ENCODE measurements at regions of chr1 and their contacts with region 1.

Region 1: GRCh38 chr1:206556750-206557635 is 49.7 kb downstream of the RASSF5 start:
- DNase-seq: peak; percentile 62 to 71
- ATAC-seq: peak; percentile 14 to 32
- H3K4me3 ChIP-seq: peak overlapping the region; percentile 56 to 91 (median 68)
- H3K27ac ChIP-seq: peak overlapping the region; percentile 35 to 81 (median 61)
- H3K4me1 ChIP-seq: peaks cover 31 to 55% of the 10 kb centered on the region in 2 donors
- H3K27me3 ChIP-seq: no peaks in the 10 kb centered on the region
- CTCF ChIP-seq: peak in 1 of 5 experiments; percentile 14
- POLR2A ChIP-seq: peak; percentile 16 to 30

Region 2: DNA sequence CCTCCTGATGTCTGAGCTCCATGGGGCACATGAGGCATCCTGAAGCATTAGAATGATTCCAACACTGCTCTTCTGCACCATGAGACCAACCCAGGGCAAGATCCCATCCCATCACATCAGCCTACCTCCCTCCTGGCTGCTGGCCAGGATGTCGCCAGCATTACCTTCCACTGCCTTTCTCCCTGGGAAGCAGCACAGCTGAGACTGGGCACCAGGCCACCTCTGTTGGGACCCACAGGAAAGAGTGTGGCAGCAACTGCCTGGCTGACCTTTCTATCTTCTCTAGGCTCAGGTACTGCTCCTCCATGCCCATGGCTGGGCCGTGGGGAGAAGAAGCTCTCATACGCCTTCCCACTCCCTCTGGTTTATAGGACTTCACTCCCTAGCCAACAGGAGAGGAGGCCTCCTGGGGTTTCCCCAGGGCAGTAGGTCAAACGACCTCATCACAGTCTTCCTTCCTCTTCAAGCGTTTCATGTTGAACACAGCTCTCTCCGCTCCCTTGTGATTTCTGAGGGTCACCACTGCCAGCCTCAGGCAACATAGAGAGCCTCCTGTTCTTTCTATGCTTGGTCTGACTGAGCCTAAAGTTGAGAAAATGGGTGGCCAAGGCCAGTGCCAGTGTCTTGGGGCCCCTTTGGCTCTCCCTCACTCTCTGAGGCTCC is 60.7 kb before region 1 on chr1:
- in situ Hi-C with region 1: no loop called
- intact Hi-C with region 1: no loop called
- DNase-seq: no peak
- ATAC-seq: no peak
- H3K4me3 ChIP-seq: no peak overlapping the region
- H3K27ac ChIP-seq: no peak overlapping the region
- H3K4me1 ChIP-seq: peaks cover 3 to 7% of the 10 kb centered on the region in 2 donors
- H3K27me3 ChIP-seq: no peaks in the 10 kb centered on the region
- CTCF ChIP-seq: no peak
- POLR2A ChIP-seq: no peak

Region 3: DNA sequence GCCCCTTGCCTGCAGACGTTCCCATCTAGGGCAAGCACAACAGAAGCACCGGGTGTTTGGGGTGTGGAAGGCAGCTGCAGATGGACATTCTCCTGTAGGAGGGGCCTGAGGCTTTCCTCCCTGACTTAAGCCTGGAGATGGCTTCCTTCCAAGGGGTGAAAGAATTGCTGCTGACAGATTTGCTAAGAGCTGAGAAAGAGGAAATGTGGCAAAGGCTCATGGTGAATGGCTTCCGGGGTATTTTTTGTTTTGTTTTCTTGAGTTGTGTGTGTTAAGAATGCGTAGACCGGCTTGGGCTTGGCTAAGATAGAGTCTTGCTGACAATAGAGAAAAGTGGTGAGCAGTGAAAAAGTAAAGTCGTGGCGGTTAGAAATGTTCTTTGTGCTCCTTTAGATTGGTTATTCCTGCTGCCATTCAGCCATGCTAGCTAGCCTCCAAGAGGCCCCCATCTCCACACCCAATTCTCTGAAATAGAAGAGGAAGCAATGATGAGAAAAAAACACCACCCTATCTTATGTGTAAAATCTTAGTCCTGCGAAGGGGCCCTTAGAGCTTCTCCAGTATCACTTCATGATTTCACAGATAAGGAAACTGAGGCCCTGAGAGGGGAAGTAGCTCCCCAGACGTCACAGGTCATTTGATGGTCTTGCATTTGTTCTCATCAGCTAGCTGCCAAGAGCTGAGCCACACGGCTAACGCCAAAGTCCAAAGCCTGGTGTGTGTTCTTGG is 18.3 kb after region 1 on chr1:
- in situ Hi-C with region 1: no loop called
- intact Hi-C with region 1: loop called (anchors 1 kb)
- DNase-seq: no peak
- ATAC-seq: no peak
- H3K4me3 ChIP-seq: no peak overlapping the region
- H3K27ac ChIP-seq: peak overlapping the region in 1 of 4 donors; percentile 37
- H3K4me1 ChIP-seq: peaks cover 12 to 33% of the 10 kb centered on the region in 2 donors
- H3K27me3 ChIP-seq: no peaks in the 10 kb centered on the region
- CTCF ChIP-seq: no peak
- POLR2A ChIP-seq: no peak